ENCODE measurements at regions of chr6 and their contacts with region 1.

Region 1: DNA sequence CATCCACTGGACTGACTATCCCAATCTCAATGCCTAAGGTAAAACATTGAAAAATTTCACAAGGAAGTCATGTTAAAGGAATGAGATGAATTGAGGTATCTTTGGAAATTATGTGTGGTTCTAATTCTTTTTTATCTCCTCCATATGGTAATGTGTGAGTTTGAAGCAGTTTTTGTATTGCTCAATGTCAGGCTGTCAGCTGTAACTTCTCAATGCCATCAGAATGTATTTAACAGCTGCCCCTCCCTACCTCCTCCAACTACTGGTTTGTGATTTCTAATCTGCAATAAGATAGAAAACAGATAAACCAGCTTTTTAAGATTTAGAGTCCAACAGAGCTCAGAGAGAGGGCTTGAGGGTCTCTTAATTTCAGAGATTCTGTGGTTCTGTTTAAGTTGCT is 1005.8 kb upstream of the ADGRB3 start:
- DNase-seq: no peak
- ATAC-seq: no peak
- H3K4me3 ChIP-seq: no peak overlapping the region
- H3K4me3 Mint-ChIP-seq: no peak overlapping the region
- H3K27ac ChIP-seq: no peak overlapping the region
- H3K27ac Mint-ChIP-seq: no peak overlapping the region
- H3K4me1 ChIP-seq: no peaks in the 10 kb centered on the region
- H3K4me1 Mint-ChIP-seq: no peaks in the 10 kb centered on the region
- H3K27me3 ChIP-seq: no peaks in the 10 kb centered on the region
- H3K27me3 Mint-ChIP-seq: no peaks in the 10 kb centered on the region
- CTCF ChIP-seq: no peak

Region 2: DNA sequence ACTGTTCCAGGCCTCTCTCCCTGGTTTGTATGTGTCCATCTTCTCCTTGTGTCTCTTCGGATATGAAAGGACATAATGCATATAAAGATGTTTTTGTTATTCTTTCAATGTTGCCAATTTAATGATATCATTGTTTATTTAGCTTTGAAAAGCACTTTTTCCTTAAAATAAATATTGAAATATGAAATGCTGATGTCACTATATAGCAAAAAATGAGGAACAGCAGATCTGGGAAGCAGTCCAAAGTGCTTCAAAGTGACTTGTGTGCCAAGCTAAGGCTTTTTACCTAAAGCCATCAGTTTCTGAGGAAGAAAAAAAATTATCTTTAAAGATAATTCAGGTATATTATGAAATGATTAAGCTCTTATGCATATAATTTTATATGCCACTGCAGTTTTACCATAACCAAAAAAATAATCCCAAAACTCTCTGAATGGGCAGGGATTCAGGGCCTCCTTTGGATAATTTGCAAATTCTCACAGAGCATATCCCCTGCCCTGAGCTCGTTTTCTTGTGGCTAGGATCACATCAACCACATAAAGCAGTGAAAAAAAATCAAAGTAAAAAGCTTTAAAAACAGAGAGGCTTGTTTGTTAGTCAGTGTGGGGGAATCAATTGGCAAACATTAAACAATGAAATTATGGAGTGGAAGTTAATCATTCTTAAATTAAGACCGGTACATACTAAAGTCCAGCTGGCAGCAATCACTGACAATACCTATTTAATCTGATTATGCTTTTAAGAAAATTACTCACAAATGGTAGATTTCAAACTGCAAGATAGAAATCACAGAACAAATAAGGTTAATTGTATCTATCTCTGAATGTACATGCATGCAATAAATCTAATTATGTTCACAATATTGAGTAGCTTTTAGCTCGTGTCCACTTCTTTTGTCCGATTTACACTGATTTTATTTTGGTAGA is 22.1 kb before region 1 on chr6:
- CTCF ChIA-PET with region 1: no interaction called
- POLR2A ChIA-PET with region 1: no interaction called
- intact Hi-C with region 1: no loop called
- DNase-seq: no peak
- ATAC-seq: no peak
- H3K4me3 ChIP-seq: no peak overlapping the region
- H3K4me3 Mint-ChIP-seq: no peak overlapping the region
- H3K27ac ChIP-seq: no peak overlapping the region
- H3K27ac Mint-ChIP-seq: no peak overlapping the region
- H3K4me1 ChIP-seq: no peaks in the 10 kb centered on the region
- H3K4me1 Mint-ChIP-seq: no peaks in the 10 kb centered on the region
- H3K27me3 ChIP-seq: no peaks in the 10 kb centered on the region
- H3K27me3 Mint-ChIP-seq: no peaks in the 10 kb centered on the region
- CTCF ChIP-seq: no peak

Region 3: GRCh38 chr6:68476611-68477010 is 847.4 kb after region 1 on chr6:
- CTCF ChIA-PET with region 1: no interaction called
- POLR2A ChIA-PET with region 1: no interaction called
- intact Hi-C with region 1: loop called in 1 of 2 experiments (anchors 10 kb)
- DNase-seq: no peak
- ATAC-seq: no peak
- H3K4me3 ChIP-seq: no peak overlapping the region
- H3K4me3 Mint-ChIP-seq: no peak overlapping the region
- H3K27ac ChIP-seq: no peak overlapping the region
- H3K27ac Mint-ChIP-seq: no peak overlapping the region
- H3K4me1 ChIP-seq: no peaks in the 10 kb centered on the region
- H3K4me1 Mint-ChIP-seq: no peaks in the 10 kb centered on the region
- H3K27me3 ChIP-seq: no peaks in the 10 kb centered on the region
- H3K27me3 Mint-ChIP-seq: no peaks in the 10 kb centered on the region
- CTCF ChIP-seq: no peak

Region 4: GRCh38 chr6:68760941-68761676 is 1131.9 kb after region 1 on chr6:
- CTCF ChIA-PET with region 1: no interaction called
- POLR2A ChIA-PET with region 1: no interaction called
- intact Hi-C with region 1: no loop called
- DNase-seq: no peak
- ATAC-seq: no peak
- H3K4me3 ChIP-seq: no peak overlapping the region
- H3K4me3 Mint-ChIP-seq: no peak overlapping the region
- H3K27ac ChIP-seq: no peak overlapping the region
- H3K27ac Mint-ChIP-seq: no peak overlapping the region
- H3K4me1 ChIP-seq: no peaks in the 10 kb centered on the region
- H3K4me1 Mint-ChIP-seq: no peaks in the 10 kb centered on the region
- H3K27me3 ChIP-seq: no peaks in the 10 kb centered on the region
- H3K27me3 Mint-ChIP-seq: no peaks in the 10 kb centered on the region
- CTCF ChIP-seq: no peak

Measured in CD4-positive, alpha-beta T cell (primary cell).